ENCODE measurements at regions of chr1 and their contacts with region 1.

Region 1: DNA sequence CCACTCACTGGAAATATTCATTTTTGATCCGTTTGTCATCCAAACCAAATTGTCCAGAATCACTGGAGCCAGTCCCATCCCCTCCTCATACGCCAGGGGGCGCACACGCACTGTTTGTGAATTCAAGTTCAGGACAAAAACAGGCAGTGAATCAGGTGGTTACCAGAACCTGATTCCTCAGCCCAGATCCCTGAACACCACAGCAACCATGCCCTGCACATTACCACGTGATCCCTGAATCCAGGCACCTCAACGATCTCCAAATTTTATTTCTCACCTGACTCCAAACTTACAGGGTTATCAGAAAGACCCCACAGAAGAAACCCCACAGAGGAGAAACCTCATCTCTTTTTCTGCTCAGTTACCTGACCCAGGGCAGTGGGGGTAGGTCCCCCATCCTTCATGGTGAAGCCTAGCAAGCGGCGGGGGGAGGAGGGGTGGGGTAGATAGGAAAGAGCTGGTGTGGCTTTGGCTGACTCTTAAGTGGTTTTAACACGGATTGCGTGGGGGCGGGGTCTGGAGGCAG is 1.4 kb upstream of the PTPRF start:
- DNase-seq: peak; percentile 89
- H3K4me3 ChIP-seq: no peak overlapping the region
- H3K27ac ChIP-seq: peak overlapping the region; percentile 90 to 95 (median 92)
- H3K4me1 ChIP-seq: peaks cover 20 to 44% (median 37%) of the 10 kb centered on the region in 4 donors
- H3K27me3 ChIP-seq: no peaks in the 10 kb centered on the region
- CTCF ChIP-seq: peak; percentile 92 to 99 (median 96)
- EP300 ChIP-seq: no peak
- POLR2A ChIP-seq: no peak

Region 2: GRCh38 chr1:43373066-43373940 is 156.0 kb before region 1 on chr1:
- in situ Hi-C with region 1: no loop called
- intact Hi-C with region 1: no loop called
- DNase-seq: no peak
- H3K4me3 ChIP-seq: no peak overlapping the region
- H3K27ac ChIP-seq: no peak overlapping the region
- H3K4me1 ChIP-seq: peaks cover 6 to 13% (median 11%) of the 10 kb centered on the region in 4 donors
- H3K27me3 ChIP-seq: no peaks in the 10 kb centered on the region
- CTCF ChIP-seq: no peak
- EP300 ChIP-seq: no peak
- POLR2A ChIP-seq: no peak

Region 3: DNA sequence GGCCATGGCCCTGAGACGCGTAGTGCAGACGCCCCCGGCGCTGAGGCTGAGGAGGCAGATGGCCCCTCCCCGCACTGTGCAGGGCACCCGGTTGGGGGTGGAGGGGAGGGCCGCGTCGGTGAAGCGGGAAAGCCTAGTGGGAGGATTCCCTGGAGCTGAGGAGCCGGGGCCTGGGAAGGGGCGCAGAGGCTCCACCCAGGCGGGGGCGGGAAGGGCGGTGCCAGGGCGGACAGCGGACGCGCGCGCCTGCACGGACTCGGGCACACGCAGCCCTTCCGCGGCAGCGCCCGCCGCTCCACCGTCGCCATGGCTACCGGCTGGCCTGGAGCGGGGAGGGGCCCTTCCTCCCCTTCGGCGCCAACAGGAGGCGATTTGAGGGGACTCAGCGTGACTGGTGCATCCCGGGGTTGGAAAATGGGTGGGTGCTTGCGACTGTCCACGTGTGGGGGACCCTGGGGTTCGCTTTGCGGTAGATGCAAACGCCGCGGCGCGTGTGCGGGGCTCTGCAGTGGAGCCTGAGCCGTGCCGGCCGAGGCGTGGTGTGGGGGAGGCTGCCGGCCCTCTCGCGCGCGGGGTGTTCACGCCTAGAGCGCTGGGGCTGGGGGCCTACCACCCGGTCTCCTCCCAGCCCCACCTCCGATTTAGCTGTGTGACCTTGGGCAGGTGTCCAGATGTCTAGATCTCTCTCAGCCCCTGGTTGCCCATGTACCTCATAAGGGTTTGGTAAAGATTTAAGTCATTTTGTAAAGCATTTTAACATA is 36.5 kb after region 1 on chr1:
- in situ Hi-C with region 1: no loop called
- intact Hi-C with region 1: loop called (anchors 1 kb)
- DNase-seq: peak; percentile 41
- H3K4me3 ChIP-seq: peak overlapping the region; percentile 22 to 50 (median 31)
- H3K27ac ChIP-seq: peak overlapping the region in 3 of 4 donors; percentile 5 to 51 (median 21)
- H3K4me1 ChIP-seq: peaks cover 0 to 25% (median 13%) of the 10 kb centered on the region in 4 donors
- H3K27me3 ChIP-seq: no peaks in the 10 kb centered on the region
- CTCF ChIP-seq: no peak
- EP300 ChIP-seq: no peak
- POLR2A ChIP-seq: no peak

Region 4: GRCh38 chr1:43648221-43648847 is 119.1 kb after region 1 on chr1:
- in situ Hi-C with region 1: no loop called
- intact Hi-C with region 1: loop called (anchors 5 kb)
- DNase-seq: no peak
- H3K4me3 ChIP-seq: no peak overlapping the region
- H3K27ac ChIP-seq: peak overlapping the region in 3 of 4 donors; percentile 93 to 94 (median 94)
- H3K4me1 ChIP-seq: peaks cover 15 to 33% (median 18%) of the 10 kb centered on the region in 4 donors
- H3K27me3 ChIP-seq: no peaks in the 10 kb centered on the region
- CTCF ChIP-seq: no peak
- EP300 ChIP-seq: no peak
- POLR2A ChIP-seq: no peak

Region 5: GRCh38 chr1:43946236-43947060 is 417.2 kb after region 1 on chr1 and contains the start of gene IPO13:
- in situ Hi-C with region 1: loop called in 1 of 4 experiments (anchors 25 kb)
- intact Hi-C with region 1: no loop called
- DNase-seq: peak; percentile 97
- H3K4me3 ChIP-seq: peak within 1 kb of the TSS; percentile 70 to 83 (median 74)
- H3K27ac ChIP-seq: peak within 1 kb of the TSS; percentile 88 to 93 (median 90)
- H3K4me1 ChIP-seq: peaks cover 14 to 43% (median 23%) of the 10 kb centered on the region in 4 donors
- H3K27me3 ChIP-seq: no peaks in the 10 kb centered on the region
- CTCF ChIP-seq: peak; percentile 64 to 95 (median 78)
- EP300 ChIP-seq: no peak
- POLR2A ChIP-seq: peak; percentile 77
- total RNA-seq, gene IPO13: 22.7 to 64.9 (median 36.5) TPM

Region 6: GRCh38 chr1:44049839-44050238 is 520.6 kb after region 1 on chr1:
- in situ Hi-C with region 1: no loop called
- intact Hi-C with region 1: loop called (anchors 10 kb)
- DNase-seq: no peak
- H3K4me3 ChIP-seq: no peak overlapping the region
- H3K27ac ChIP-seq: peak overlapping the region in 1 of 4 donors; percentile 35
- H3K4me1 ChIP-seq: peaks cover 0 to 8% (median 5%) of the 10 kb centered on the region in 4 donors
- H3K27me3 ChIP-seq: no peaks in the 10 kb centered on the region
- CTCF ChIP-seq: no peak
- EP300 ChIP-seq: no peak
- POLR2A ChIP-seq: no peak